Caco-2 (cell line): ENCODE measurements at regions of chr17 and their contacts with region 1.

Region 1: GRCh38 chr17:76547184-76547641 is 7.4 kb downstream of the PRCD start:
- DNase-seq: peak in 1 of 2 experiments; percentile 80
- H3K4me3 ChIP-seq: no peak overlapping the region
- H3K4me3 Mint-ChIP-seq: no peak overlapping the region
- H3K27ac Mint-ChIP-seq: no peak overlapping the region
- H3K4me1 ChIP-seq: no peaks in the 10 kb centered on the region
- H3K4me1 Mint-ChIP-seq: peaks cover 5% of the 10 kb centered on the region
- H3K27me3 ChIP-seq: no peaks in the 10 kb centered on the region
- H3K27me3 Mint-ChIP-seq: no peaks in the 10 kb centered on the region
- CTCF ChIP-seq: peak; percentile 80 to 82

Region 2: GRCh38 chr17:76467366-76467765 is 79.8 kb before region 1 on chr17 and contains the start of gene AANAT:
- CTCF ChIA-PET with region 1: no interaction called
- POLR2A ChIA-PET with region 1: no interaction called
- intact Hi-C with region 1: loop called (anchors 1 kb)
- DNase-seq: no peak
- H3K4me3 ChIP-seq: no peak within 1 kb of the TSS
- H3K4me3 Mint-ChIP-seq: no peak within 1 kb of the TSS
- H3K27ac Mint-ChIP-seq: peak within 1 kb of the TSS; percentile 35
- H3K4me1 ChIP-seq: 0 out of 2 replicates have a peak, but pooled peaks cover 5% of the 10 kb centered on the region
- H3K4me1 Mint-ChIP-seq: no peaks in the 10 kb centered on the region
- H3K27me3 ChIP-seq: no peaks in the 10 kb centered on the region
- H3K27me3 Mint-ChIP-seq: no peaks in the 10 kb centered on the region
- CTCF ChIP-seq: no peak
- total RNA-seq, gene AANAT: not detected in 2 replicates

Region 3: DNA sequence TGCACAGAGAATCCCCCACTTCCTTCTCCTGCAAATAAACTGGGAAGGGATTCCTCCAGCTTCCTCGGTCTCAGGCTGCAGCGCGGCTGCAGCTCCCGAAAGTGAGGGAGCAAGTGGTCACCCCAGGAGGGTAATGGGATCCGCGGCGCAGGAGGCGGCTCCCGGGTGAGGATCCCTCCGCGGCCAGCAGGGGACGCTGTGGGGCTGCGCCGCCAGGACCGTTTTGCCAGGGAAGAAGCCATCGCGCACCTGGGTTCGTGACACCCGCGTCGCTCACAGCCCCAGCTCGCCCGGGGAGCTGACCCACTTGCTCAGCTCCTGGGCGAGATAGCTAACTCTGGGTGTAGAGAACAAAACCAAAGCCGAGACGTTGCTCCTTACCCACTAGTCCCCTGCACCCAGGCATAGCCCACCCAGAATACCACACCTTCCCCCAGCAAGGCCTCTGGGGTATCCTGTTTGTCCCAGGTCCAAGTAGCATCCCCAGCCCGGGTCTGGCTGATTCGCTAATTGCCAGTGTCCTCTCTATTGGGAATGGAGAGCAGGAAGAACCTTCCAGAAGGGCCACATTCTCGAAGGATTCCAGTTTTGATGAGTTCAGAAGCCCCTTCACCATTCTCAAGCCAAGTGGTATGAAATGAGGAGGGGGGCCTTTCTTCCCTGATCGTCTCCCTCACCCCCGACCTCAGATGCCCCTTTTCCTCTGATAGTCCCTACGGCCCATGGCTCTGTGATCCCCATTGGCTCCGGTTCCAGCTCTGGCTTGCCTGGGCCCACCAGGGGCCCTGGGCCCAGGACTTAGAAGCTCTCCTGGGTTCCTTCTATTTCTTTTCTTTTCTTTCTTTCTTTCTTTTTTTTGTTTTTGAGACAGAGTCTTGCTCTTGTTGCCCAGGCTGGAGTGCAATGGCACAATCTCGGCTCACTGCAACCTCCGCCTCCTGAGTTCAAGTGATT is 23.9 kb before region 1 on chr17:
- CTCF ChIA-PET with region 1: interaction called, 5 read pairs
- POLR2A ChIA-PET with region 1: no interaction called
- intact Hi-C with region 1: loop called (anchors 1 kb)
- DNase-seq: peak in 1 of 2 experiments; percentile 85
- H3K4me3 ChIP-seq: no peak overlapping the region
- H3K4me3 Mint-ChIP-seq: no peak overlapping the region
- H3K27ac Mint-ChIP-seq: no peak overlapping the region
- H3K4me1 ChIP-seq: peaks cover 4% of the 10 kb centered on the region; the same call in 1 of the 2 replicates
- H3K4me1 Mint-ChIP-seq: no peaks in the 10 kb centered on the region
- H3K27me3 ChIP-seq: no peaks in the 10 kb centered on the region
- H3K27me3 Mint-ChIP-seq: no peaks in the 10 kb centered on the region
- CTCF ChIP-seq: peak; percentile 94 to 98

Region 4: GRCh38 chr17:76868176-76868668 is 321.0 kb after region 1 on chr17 and contains the start of gene MGAT5B:
- CTCF ChIA-PET with region 1: no interaction called
- POLR2A ChIA-PET with region 1: no interaction called
- intact Hi-C with region 1: no loop called
- DNase-seq: peak; percentile 80 to 93
- H3K4me3 ChIP-seq: peak within 1 kb of the TSS; percentile 44
- H3K4me3 Mint-ChIP-seq: peak within 1 kb of the TSS; percentile 62
- H3K27ac Mint-ChIP-seq: no peak within 1 kb of the TSS
- H3K4me1 ChIP-seq: peaks cover 17% of the 10 kb centered on the region; the same call in 1 of the 2 replicates
- H3K4me1 Mint-ChIP-seq: peaks cover 13% of the 10 kb centered on the region
- H3K27me3 ChIP-seq: no peaks in the 10 kb centered on the region
- H3K27me3 Mint-ChIP-seq: no peaks in the 10 kb centered on the region
- CTCF ChIP-seq: peak; percentile 59 to 92
- total RNA-seq, gene MGAT5B: 8.9 and 9.1 TPM in 2 replicates